ENCODE measurements at regions of chr2 and their contacts with region 1.

Region 1: GRCh38 chr2:51028829-51029228 is 3.1 kb downstream of the NRXN1 start:
- DNase-seq: no peak
- H3K4me3 ChIP-seq: no peak overlapping the region
- H3K4me3 Mint-ChIP-seq: no peak overlapping the region
- H3K27ac Mint-ChIP-seq: no peak overlapping the region
- H3K4me1 ChIP-seq: no peaks in the 10 kb centered on the region
- H3K4me1 Mint-ChIP-seq: no peaks in the 10 kb centered on the region
- H3K27me3 ChIP-seq: no peaks in the 10 kb centered on the region
- H3K27me3 Mint-ChIP-seq: peaks cover 8% of the 10 kb centered on the region
- CTCF ChIP-seq: no peak

Region 2: GRCh38 chr2:50763776-50764175 is 265.1 kb before region 1 on chr2:
- CTCF ChIA-PET with region 1: no interaction called
- POLR2A ChIA-PET with region 1: no interaction called
- intact Hi-C with region 1: no loop called
- DNase-seq: no peak
- H3K4me3 ChIP-seq: no peak overlapping the region
- H3K4me3 Mint-ChIP-seq: no peak overlapping the region
- H3K27ac Mint-ChIP-seq: no peak overlapping the region
- H3K4me1 ChIP-seq: no peaks in the 10 kb centered on the region; the same call in 1 of the 2 replicates
- H3K4me1 Mint-ChIP-seq: no peaks in the 10 kb centered on the region
- H3K27me3 ChIP-seq: no peaks in the 10 kb centered on the region
- H3K27me3 Mint-ChIP-seq: peaks cover 5% of the 10 kb centered on the region
- CTCF ChIP-seq: no peak

Region 3: DNA sequence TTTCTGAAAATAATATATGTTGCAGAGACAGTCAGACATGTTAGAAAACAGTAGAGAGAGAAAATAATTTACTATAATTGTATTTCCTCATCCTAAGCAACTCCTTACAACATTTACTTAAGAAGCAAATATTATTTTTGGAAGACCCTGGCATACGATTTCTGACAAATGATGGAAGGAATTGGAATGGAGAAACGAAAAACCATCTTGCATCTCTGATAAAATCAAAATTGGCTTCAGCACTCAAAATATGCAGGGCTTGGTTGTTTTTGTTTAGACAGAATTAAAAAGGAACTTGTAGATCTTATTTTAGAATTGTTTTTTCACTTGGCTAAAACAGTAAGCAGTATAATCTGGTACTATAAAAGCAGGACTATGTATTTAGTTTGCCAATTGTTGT is 85.0 kb before region 1 on chr2:
- CTCF ChIA-PET with region 1: no interaction called
- POLR2A ChIA-PET with region 1: no interaction called
- intact Hi-C with region 1: no loop called
- DNase-seq: no peak
- H3K4me3 ChIP-seq: no peak overlapping the region
- H3K4me3 Mint-ChIP-seq: no peak overlapping the region
- H3K27ac Mint-ChIP-seq: no peak overlapping the region
- H3K4me1 ChIP-seq: no peaks in the 10 kb centered on the region
- H3K4me1 Mint-ChIP-seq: no peaks in the 10 kb centered on the region
- H3K27me3 ChIP-seq: no peaks in the 10 kb centered on the region
- H3K27me3 Mint-ChIP-seq: no peaks in the 10 kb centered on the region
- CTCF ChIP-seq: no peak

Region 4: GRCh38 chr2:50957896-50958295 is 70.9 kb before region 1 on chr2:
- CTCF ChIA-PET with region 1: no interaction called
- POLR2A ChIA-PET with region 1: no interaction called
- intact Hi-C with region 1: loop called (anchors 5 kb)
- DNase-seq: no peak
- H3K4me3 ChIP-seq: no peak overlapping the region
- H3K4me3 Mint-ChIP-seq: no peak overlapping the region
- H3K27ac Mint-ChIP-seq: no peak overlapping the region
- H3K4me1 ChIP-seq: no peaks in the 10 kb centered on the region
- H3K4me1 Mint-ChIP-seq: no peaks in the 10 kb centered on the region
- H3K27me3 ChIP-seq: no peaks in the 10 kb centered on the region
- H3K27me3 Mint-ChIP-seq: no peaks in the 10 kb centered on the region
- CTCF ChIP-seq: no peak